Transverse colon (tissue), 4 donors: ENCODE measurements at regions of chr6 and their contacts with region 1.

Region 1: GRCh38 chr6:3849681-3850450 is 693 bp downstream of the FAM50B start:
- DNase-seq: peak; percentile 13
- H3K4me3 ChIP-seq: peak overlapping the region; percentile 23 to 52 (median 35)
- H3K27ac ChIP-seq: peak overlapping the region; percentile 57 to 74 (median 72)
- H3K4me1 ChIP-seq: peaks cover 0 to 3% (median 0%) of the 10 kb centered on the region in 4 donors
- H3K27me3 ChIP-seq: no peaks in the 10 kb centered on the region
- CTCF ChIP-seq: no peak
- EP300 ChIP-seq: no peak
- POLR2A ChIP-seq: no peak

Region 2: GRCh38 chr6:3592371-3592941 is 257.4 kb before region 1 on chr6:
- in situ Hi-C with region 1: no loop called
- intact Hi-C with region 1: no loop called
- DNase-seq: no peak
- H3K4me3 ChIP-seq: no peak overlapping the region
- H3K27ac ChIP-seq: no peak overlapping the region
- H3K4me1 ChIP-seq: no peaks in the 10 kb centered on the region
- H3K27me3 ChIP-seq: no peaks in the 10 kb centered on the region
- CTCF ChIP-seq: no peak
- EP300 ChIP-seq: no peak
- POLR2A ChIP-seq: no peak

Region 3: DNA sequence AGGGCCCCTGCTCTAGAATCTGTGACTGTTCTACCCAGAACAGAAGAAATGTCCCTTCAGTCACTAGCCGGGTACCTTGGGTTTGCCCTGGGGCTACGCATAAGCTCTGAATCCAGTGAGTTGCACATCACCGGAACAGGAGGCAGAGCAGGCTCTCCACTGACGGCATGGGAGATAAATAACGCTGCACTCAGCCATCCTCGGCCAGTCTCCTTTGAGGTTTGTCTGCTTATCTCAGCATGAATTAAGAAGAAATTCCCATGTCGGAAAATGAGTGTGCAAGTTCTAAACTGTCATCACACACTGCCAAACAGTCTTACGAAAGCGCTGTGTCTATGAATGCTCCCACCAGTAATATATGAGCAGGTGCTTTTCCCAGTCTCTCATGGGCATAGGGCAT is 90.1 kb after region 1 on chr6:
- in situ Hi-C with region 1: no loop called
- intact Hi-C with region 1: loop called (anchors 10 kb)
- DNase-seq: no peak
- H3K4me3 ChIP-seq: no peak overlapping the region
- H3K27ac ChIP-seq: no peak overlapping the region
- H3K4me1 ChIP-seq: peaks cover 0 to 5% (median 0%) of the 10 kb centered on the region in 4 donors
- H3K27me3 ChIP-seq: peaks cover 28% of the 10 kb centered on the region
- CTCF ChIP-seq: no peak
- EP300 ChIP-seq: no peak
- POLR2A ChIP-seq: no peak